ENCODE measurements at regions of chr14 and their contacts with region 1.

Region 1: GRCh38 chr14:60724137-60724619 is at the start of gene SIX4:
- DNase-seq: peak in 1 of 9 donors; percentile 2
- ATAC-seq: peak; percentile 33
- H3K4me3 ChIP-seq: peak within 1 kb of the TSS; percentile 61
- H3K4me3 Mint-ChIP-seq: peak within 1 kb of the TSS; percentile 85 to 96 (median 90)
- H3K27ac ChIP-seq: no peak within 1 kb of the TSS
- H3K27ac Mint-ChIP-seq: peak within 1 kb of the TSS in 1 of 9 donors; percentile 76
- H3K4me1 ChIP-seq: peaks cover 5 to 6% of the 10 kb centered on the region in 2 donors
- H3K4me1 Mint-ChIP-seq: peaks cover 0 to 28% (median 16%) of the 10 kb centered on the region in 7 donors
- H3K27me3 ChIP-seq: peaks cover 5 to 27% of the 10 kb centered on the region in 2 donors
- H3K27me3 Mint-ChIP-seq: peaks cover 74 to 80% (median 80%) of the 10 kb centered on the region in 5 donors
- total RNA-seq, gene SIX4: 0.46 TPM in 1 of 5 experiments, not detected in the others

Region 2: DNA sequence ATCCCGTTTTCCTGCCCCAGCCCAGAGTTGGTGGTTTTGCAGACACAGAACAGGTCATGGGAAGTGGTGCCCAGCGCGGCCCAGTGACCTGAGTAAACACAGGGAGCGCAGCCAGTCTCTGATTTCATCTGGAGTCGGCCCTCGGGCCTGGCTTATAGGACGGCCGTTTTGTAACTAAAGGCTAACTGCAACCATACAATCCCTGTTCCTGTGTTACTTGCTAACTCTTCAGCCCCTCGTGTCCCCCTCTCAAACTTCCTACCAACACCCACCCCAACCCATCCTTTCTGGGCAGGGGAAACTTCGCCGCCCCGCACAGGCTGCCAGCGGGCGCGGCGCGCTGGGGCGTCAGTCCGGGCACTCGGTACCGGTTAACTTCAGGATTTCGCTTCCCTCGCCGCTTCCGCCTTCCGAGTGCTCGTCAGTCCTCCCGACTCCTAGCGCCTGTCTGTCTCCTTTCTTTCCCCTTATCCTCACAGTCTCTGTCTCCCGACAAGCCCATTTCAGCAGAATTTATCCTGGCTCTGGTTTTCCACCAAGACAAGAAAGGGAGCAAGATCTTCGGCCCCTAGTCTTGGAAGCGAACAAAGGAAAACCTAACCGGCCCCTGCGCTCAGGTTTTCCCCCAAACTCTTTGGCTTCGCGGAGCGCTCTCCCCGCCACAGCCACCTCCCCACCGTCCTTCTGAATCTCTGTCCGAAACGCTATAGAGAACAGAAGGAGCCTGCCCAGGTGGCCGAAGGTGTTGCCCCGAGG is 76.9 kb before region 1 on chr14:
- CTCF ChIA-PET with region 1: no interaction called
- POLR2A ChIA-PET with region 1: no interaction called
- intact Hi-C with region 1: loop called in 1 of 2 experiments (anchors 5 kb)
- DNase-seq: peak in 1 of 9 donors; percentile 37
- ATAC-seq: no peak
- H3K4me3 ChIP-seq: no peak overlapping the region
- H3K4me3 Mint-ChIP-seq: peak overlapping the region; percentile 55 to 76 (median 68)
- H3K27ac ChIP-seq: no peak overlapping the region
- H3K27ac Mint-ChIP-seq: peak overlapping the region in 1 of 9 donors; percentile 21
- H3K4me1 ChIP-seq: peaks cover 0 to 22% of the 10 kb centered on the region in 2 donors
- H3K4me1 Mint-ChIP-seq: peaks cover 18 to 59% (median 46%) of the 10 kb centered on the region in 7 donors
- H3K27me3 ChIP-seq: peaks cover 0 to 32% of the 10 kb centered on the region in 2 donors
- H3K27me3 Mint-ChIP-seq: peaks cover 82 to 94% (median 84%) of the 10 kb centered on the region in 5 donors

Region 3: GRCh38 chr14:60656686-60657455 is 67.3 kb before region 1 on chr14:
- CTCF ChIA-PET with region 1: no interaction called
- POLR2A ChIA-PET with region 1: no interaction called
- intact Hi-C with region 1: loop called (anchors 5 kb)
- DNase-seq: peak in 1 of 9 donors; percentile 54
- ATAC-seq: peak; percentile 49
- H3K4me3 ChIP-seq: peak overlapping the region; percentile 30
- H3K4me3 Mint-ChIP-seq: peak overlapping the region; percentile 66 to 84 (median 79)
- H3K27ac ChIP-seq: no peak overlapping the region
- H3K27ac Mint-ChIP-seq: no peak overlapping the region
- H3K4me1 ChIP-seq: peaks cover 12 to 17% of the 10 kb centered on the region in 2 donors
- H3K4me1 Mint-ChIP-seq: peaks cover 13 to 58% (median 50%) of the 10 kb centered on the region in 7 donors
- H3K27me3 ChIP-seq: peaks cover 14 to 38% of the 10 kb centered on the region in 2 donors
- H3K27me3 Mint-ChIP-seq: peaks cover 75 to 90% (median 82%) of the 10 kb centered on the region in 5 donors

Region 4: GRCh38 chr14:60734465-60735242 is 10.5 kb after region 1 on chr14 and contains the start of gene MNAT1:
- CTCF ChIA-PET with region 1: no interaction called
- POLR2A ChIA-PET with region 1: no interaction called
- intact Hi-C with region 1: loop called in 1 of 2 experiments (anchors 1 kb)
- DNase-seq: peak; percentile 65 to 81 (median 75)
- ATAC-seq: peak; percentile 95
- H3K4me3 ChIP-seq: peak within 1 kb of the TSS; percentile 64
- H3K4me3 Mint-ChIP-seq: peak within 1 kb of the TSS; percentile 95 to 100 (median 99)
- H3K27ac ChIP-seq: peak within 1 kb of the TSS; percentile 70
- H3K27ac Mint-ChIP-seq: peak within 1 kb of the TSS; percentile 88 to 99 (median 94)
- H3K4me1 ChIP-seq: peaks cover 0 to 10% of the 10 kb centered on the region in 2 donors
- H3K4me1 Mint-ChIP-seq: peaks cover 22 to 37% (median 29%) of the 10 kb centered on the region in 7 donors
- H3K27me3 ChIP-seq: peaks cover 0 to 4% of the 10 kb centered on the region in 2 donors
- H3K27me3 Mint-ChIP-seq: peaks cover 13 to 42% (median 22%) of the 10 kb centered on the region in 5 donors
- total RNA-seq, gene MNAT1: 16.0 to 39.1 (median 20.0) TPM

Region 5: GRCh38 chr14:60753264-60754119 is 29.3 kb after region 1 on chr14:
- CTCF ChIA-PET with region 1: no interaction called
- POLR2A ChIA-PET with region 1: no interaction called
- intact Hi-C with region 1: loop called (anchors 5 kb)
- DNase-seq: peak in 8 of 9 donors; percentile 54 to 86 (median 81)
- ATAC-seq: peak; percentile 96
- H3K4me3 ChIP-seq: no peak overlapping the region
- H3K4me3 Mint-ChIP-seq: peak overlapping the region in 9 of 10 donors; percentile 48 to 85 (median 61)
- H3K27ac ChIP-seq: no peak overlapping the region
- H3K27ac Mint-ChIP-seq: peak overlapping the region; percentile 29 to 93 (median 81)
- H3K4me1 ChIP-seq: peaks cover 19 to 20% of the 10 kb centered on the region in 2 donors
- H3K4me1 Mint-ChIP-seq: peaks cover 21 to 64% (median 42%) of the 10 kb centered on the region in 7 donors
- H3K27me3 ChIP-seq: no peaks in the 10 kb centered on the region
- H3K27me3 Mint-ChIP-seq: peaks cover 0 to 7% (median 0%) of the 10 kb centered on the region in 5 donors

Region 6: DNA sequence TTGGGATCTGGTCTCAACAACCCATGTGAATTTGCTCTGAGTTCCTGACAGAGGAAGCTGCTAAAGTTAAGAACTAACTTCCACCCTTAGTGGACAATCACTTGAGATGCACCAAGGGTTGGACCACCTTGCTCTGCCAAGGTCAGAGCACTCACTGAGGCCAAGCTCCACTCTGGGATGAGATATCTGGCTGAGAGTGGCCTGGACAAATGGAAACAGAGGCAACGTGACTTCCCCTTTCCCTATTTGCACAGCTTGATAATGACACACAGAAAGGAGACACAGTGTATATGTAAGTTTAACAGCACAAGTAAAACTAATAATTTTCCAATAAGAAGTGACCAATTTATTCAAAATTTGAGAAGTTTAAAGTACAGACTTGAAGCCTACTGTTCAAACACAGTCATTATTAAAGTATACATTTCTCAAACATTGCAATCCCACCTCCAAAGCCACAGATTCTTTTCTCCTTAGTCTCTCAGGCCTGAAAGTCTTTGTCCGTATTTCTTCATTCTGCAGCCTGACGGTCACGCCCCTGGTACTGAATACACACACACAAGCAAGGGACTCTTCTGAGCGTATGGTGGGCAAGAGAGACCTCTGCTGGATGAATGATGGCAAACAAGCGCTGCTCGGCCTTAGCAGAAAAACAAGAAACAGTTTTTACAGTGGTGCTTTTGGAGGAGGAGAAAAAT is 528.3 kb after region 1 on chr14:
- CTCF ChIA-PET with region 1: no interaction called
- POLR2A ChIA-PET with region 1: no interaction called
- intact Hi-C with region 1: loop called in 1 of 2 experiments (anchors 10 kb)
- DNase-seq: peak; percentile 12 to 68 (median 50)
- ATAC-seq: peak; percentile 95
- H3K4me3 ChIP-seq: no peak overlapping the region
- H3K4me3 Mint-ChIP-seq: no peak overlapping the region
- H3K27ac ChIP-seq: no peak overlapping the region
- H3K27ac Mint-ChIP-seq: no peak overlapping the region
- H3K4me1 ChIP-seq: no peaks in the 10 kb centered on the region
- H3K4me1 Mint-ChIP-seq: peaks cover 0 to 26% (median 0%) of the 10 kb centered on the region in 7 donors
- H3K27me3 ChIP-seq: peaks cover 0 to 4% of the 10 kb centered on the region in 2 donors
- H3K27me3 Mint-ChIP-seq: peaks cover 11 to 25% (median 17%) of the 10 kb centered on the region in 5 donors

Measured in naive thymus-derived CD4-positive, alpha-beta T cell (primary cell).